ENCODE measurements at regions of chr22 and their contacts with region 1.

Region 1: GRCh38 chr22:33867115-33867866 is 53.0 kb downstream of the LARGE1 start:
- DNase-seq: no peak
- ATAC-seq: no peak
- H3K4me3 ChIP-seq: no peak overlapping the region
- H3K4me3 Mint-ChIP-seq: no peak overlapping the region
- H3K27ac ChIP-seq: no peak overlapping the region
- H3K27ac Mint-ChIP-seq: no peak overlapping the region
- H3K4me1 ChIP-seq: no peaks in the 10 kb centered on the region
- H3K4me1 Mint-ChIP-seq: no peaks in the 10 kb centered on the region
- H3K27me3 ChIP-seq: no peaks in the 10 kb centered on the region
- H3K27me3 Mint-ChIP-seq: no peaks in the 10 kb centered on the region
- CTCF ChIP-seq: no peak

Region 2: DNA sequence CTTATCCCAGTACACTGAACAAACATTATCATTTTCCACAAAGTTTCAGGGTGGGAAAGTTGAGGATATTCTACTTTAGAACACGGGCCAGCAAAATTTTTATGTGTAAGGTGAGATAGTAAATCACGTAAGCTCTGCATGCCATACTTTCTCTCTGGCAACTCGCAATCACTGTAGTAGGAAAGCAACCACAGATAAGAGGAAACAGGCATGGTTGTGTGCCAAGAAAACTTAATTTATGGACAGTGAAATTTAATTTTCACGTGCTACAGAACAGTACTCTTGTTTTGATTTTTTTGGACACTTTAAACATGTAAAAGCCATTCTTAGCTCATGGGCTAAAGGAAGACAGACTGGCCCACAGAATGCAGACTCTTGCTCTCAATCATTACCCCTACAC is 29.5 kb before region 1 on chr22:
- CTCF ChIA-PET with region 1: no interaction called
- POLR2A ChIA-PET with region 1: no interaction called
- intact Hi-C with region 1: loop called in 1 of 2 experiments (anchors 2 kb)
- DNase-seq: no peak
- ATAC-seq: no peak
- H3K4me3 ChIP-seq: no peak overlapping the region
- H3K4me3 Mint-ChIP-seq: no peak overlapping the region
- H3K27ac ChIP-seq: no peak overlapping the region
- H3K27ac Mint-ChIP-seq: no peak overlapping the region
- H3K4me1 ChIP-seq: no peaks in the 10 kb centered on the region
- H3K4me1 Mint-ChIP-seq: no peaks in the 10 kb centered on the region
- H3K27me3 ChIP-seq: no peaks in the 10 kb centered on the region
- H3K27me3 Mint-ChIP-seq: no peaks in the 10 kb centered on the region
- CTCF ChIP-seq: no peak

Region 3: DNA sequence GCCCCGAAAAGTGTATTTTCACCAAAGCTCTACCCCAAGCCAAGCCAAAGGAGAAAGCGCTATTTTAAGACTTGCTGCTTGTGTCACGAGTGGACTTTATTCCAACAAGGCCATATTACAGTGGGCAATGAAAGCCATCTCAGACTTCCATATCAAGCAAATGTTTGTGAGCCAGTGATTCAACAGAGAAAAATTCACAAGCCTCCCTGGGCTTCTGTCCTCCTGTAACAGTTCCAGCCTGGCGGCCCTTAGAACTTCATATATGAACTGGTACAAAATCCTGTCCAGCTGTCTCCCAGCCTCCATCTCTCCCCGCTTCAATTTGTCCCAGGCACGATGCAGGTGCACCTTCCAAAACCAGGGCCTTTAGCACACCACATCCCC is 41.8 kb after region 1 on chr22:
- CTCF ChIA-PET with region 1: no interaction called
- POLR2A ChIA-PET with region 1: no interaction called
- intact Hi-C with region 1: no loop called
- DNase-seq: no peak
- ATAC-seq: no peak
- H3K4me3 ChIP-seq: no peak overlapping the region
- H3K4me3 Mint-ChIP-seq: no peak overlapping the region
- H3K27ac ChIP-seq: no peak overlapping the region
- H3K27ac Mint-ChIP-seq: no peak overlapping the region
- H3K4me1 ChIP-seq: no peaks in the 10 kb centered on the region
- H3K4me1 Mint-ChIP-seq: no peaks in the 10 kb centered on the region
- H3K27me3 ChIP-seq: no peaks in the 10 kb centered on the region
- H3K27me3 Mint-ChIP-seq: peaks cover 8% of the 10 kb centered on the region
- CTCF ChIP-seq: no peak